CD4-positive, alpha-beta T cell (primary cell): ENCODE measurements at regions of chr10 and their contacts with region 1.

Region 1: GRCh38 chr10:80509403-80510161 is 28.1 kb upstream of the SH2D4B start:
- DNase-seq: no peak
- ATAC-seq: no peak
- H3K4me3 ChIP-seq: no peak overlapping the region
- H3K4me3 Mint-ChIP-seq: no peak overlapping the region
- H3K27ac ChIP-seq: no peak overlapping the region
- H3K27ac Mint-ChIP-seq: peak overlapping the region; percentile 2
- H3K4me1 ChIP-seq: peaks cover 42% of the 10 kb centered on the region
- H3K4me1 Mint-ChIP-seq: peaks cover 41% of the 10 kb centered on the region
- H3K27me3 ChIP-seq: no peaks in the 10 kb centered on the region
- H3K27me3 Mint-ChIP-seq: no peaks in the 10 kb centered on the region
- CTCF ChIP-seq: no peak

Region 2: DNA sequence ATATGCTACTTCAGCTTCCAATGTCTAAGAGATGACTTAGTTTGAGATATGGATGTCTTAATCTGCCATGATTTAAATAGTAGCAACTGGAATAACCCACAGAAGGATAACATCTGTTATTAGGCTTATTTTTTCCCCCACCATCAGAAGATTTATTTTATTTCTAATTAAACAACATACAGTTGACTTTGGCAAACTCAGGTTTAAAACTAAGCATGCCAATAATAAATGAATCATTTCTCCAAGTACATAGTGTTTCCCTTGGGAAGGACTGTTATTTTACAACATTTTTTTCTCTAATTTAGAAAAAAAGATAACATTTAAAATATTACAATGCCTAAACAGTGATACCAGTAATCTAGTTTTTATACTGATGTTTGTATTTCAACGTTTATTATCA is 619.1 kb before region 1 on chr10:
- CTCF ChIA-PET with region 1: no interaction called
- POLR2A ChIA-PET with region 1: no interaction called
- intact Hi-C with region 1: no loop called
- DNase-seq: no peak
- ATAC-seq: no peak
- H3K4me3 ChIP-seq: no peak overlapping the region
- H3K4me3 Mint-ChIP-seq: no peak overlapping the region
- H3K27ac ChIP-seq: no peak overlapping the region
- H3K27ac Mint-ChIP-seq: no peak overlapping the region
- H3K4me1 ChIP-seq: no peaks in the 10 kb centered on the region
- H3K4me1 Mint-ChIP-seq: no peaks in the 10 kb centered on the region
- H3K27me3 ChIP-seq: peaks cover 0 to 2% of the 10 kb centered on the region in 2 experiments
- H3K27me3 Mint-ChIP-seq: peaks cover 40% of the 10 kb centered on the region
- CTCF ChIP-seq: no peak

Region 3: GRCh38 chr10:80408242-80409101 is 101.1 kb before region 1 on chr10 and contains the start of gene PRXL2A:
- CTCF ChIA-PET with region 1: interaction called, 10 read pairs
- POLR2A ChIA-PET with region 1: interaction called, 8 read pairs
- intact Hi-C with region 1: no loop called
- DNase-seq: peak; percentile 61 to 89 (median 76)
- ATAC-seq: peak; percentile 95
- H3K4me3 ChIP-seq: peak within 1 kb of the TSS; percentile 83
- H3K4me3 Mint-ChIP-seq: peak within 1 kb of the TSS; percentile 94
- H3K27ac ChIP-seq: peak within 1 kb of the TSS in 1 of 2 donors; percentile 10
- H3K27ac Mint-ChIP-seq: peak within 1 kb of the TSS; percentile 69
- H3K4me1 ChIP-seq: peaks cover 19% of the 10 kb centered on the region
- H3K4me1 Mint-ChIP-seq: peaks cover 50% of the 10 kb centered on the region
- H3K27me3 ChIP-seq: no peaks in the 10 kb centered on the region
- H3K27me3 Mint-ChIP-seq: no peaks in the 10 kb centered on the region
- CTCF ChIP-seq: no peak
- total RNA-seq, gene PRXL2A: 3.9 to 4.6 TPM

Region 4: GRCh38 chr10:80453701-80454513 is 55.7 kb before region 1 on chr10 and contains the start of gene TSPAN14:
- CTCF ChIA-PET with region 1: interaction called, 250 read pairs
- POLR2A ChIA-PET with region 1: interaction called, 302 read pairs
- intact Hi-C with region 1: no loop called
- DNase-seq: peak; percentile 50 to 90 (median 76)
- ATAC-seq: peak; percentile 61
- H3K4me3 ChIP-seq: peak within 1 kb of the TSS; percentile 97
- H3K4me3 Mint-ChIP-seq: peak within 1 kb of the TSS; percentile 95
- H3K27ac ChIP-seq: peak within 1 kb of the TSS; percentile 67 to 80
- H3K27ac Mint-ChIP-seq: peak within 1 kb of the TSS; percentile 92
- H3K4me1 ChIP-seq: peaks cover 47% of the 10 kb centered on the region
- H3K4me1 Mint-ChIP-seq: peaks cover 36% of the 10 kb centered on the region
- H3K27me3 ChIP-seq: no peaks in the 10 kb centered on the region
- H3K27me3 Mint-ChIP-seq: no peaks in the 10 kb centered on the region
- CTCF ChIP-seq: no peak
- total RNA-seq, gene TSPAN14: 167 to 168 TPM

Region 5: DNA sequence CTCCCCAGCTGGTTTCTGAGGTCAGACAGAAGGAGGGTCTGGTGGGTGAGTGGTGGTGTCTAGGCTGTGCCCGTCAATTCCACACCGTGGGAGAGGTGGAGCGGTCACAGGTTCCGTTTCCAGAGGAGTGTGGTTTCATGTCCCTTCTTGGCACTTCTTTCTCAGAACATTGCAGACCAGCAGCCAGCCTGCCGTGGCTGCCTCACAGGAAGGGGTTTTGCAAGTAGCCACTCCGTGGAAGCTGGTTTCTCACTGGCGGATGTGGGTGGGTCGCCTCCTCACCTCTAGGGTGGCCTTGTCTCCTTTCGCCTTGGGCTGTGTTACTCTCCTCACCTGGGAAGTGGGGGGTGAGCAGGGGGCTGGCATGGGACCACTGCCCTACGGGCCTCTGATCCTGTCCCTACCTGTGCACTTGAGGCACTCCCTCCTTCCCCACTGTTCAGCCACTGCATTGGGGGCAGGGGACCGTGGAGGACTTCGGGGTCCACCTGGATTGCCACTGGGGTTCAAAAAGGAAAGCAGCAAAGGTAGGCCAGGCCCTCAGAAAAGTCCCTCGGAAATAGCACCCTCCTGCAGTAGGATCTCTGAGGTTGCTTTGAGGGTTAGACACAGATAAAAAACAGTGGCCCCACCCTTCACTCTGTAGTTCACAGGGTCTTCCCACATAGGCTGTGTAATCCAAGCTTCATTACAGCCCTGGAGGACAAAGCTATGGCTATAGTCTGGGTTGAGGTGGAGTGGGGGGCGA is 21.6 kb before region 1 on chr10:
- CTCF ChIA-PET with region 1: interaction called, 55 read pairs
- POLR2A ChIA-PET with region 1: interaction called, 158 read pairs
- intact Hi-C with region 1: no loop called
- DNase-seq: peak in 13 of 14 experiments; percentile 43 to 88 (median 58)
- ATAC-seq: peak; percentile 62
- H3K4me3 ChIP-seq: peak overlapping the region; percentile 37
- H3K4me3 Mint-ChIP-seq: peak overlapping the region; percentile 56
- H3K27ac ChIP-seq: peak overlapping the region; percentile 81 to 84
- H3K27ac Mint-ChIP-seq: peak overlapping the region; percentile 78
- H3K4me1 ChIP-seq: peaks cover 98% of the 10 kb centered on the region
- H3K4me1 Mint-ChIP-seq: peaks cover 99% of the 10 kb centered on the region
- H3K27me3 ChIP-seq: no peaks in the 10 kb centered on the region
- H3K27me3 Mint-ChIP-seq: no peaks in the 10 kb centered on the region
- CTCF ChIP-seq: no peak

Region 6: GRCh38 chr10:80498833-80499741 is 10.5 kb before region 1 on chr10:
- CTCF ChIA-PET with region 1: interaction called, 21 read pairs
- POLR2A ChIA-PET with region 1: interaction called, 158 read pairs
- intact Hi-C with region 1: no loop called
- DNase-seq: peak in 9 of 14 experiments; percentile 31 to 77 (median 49)
- ATAC-seq: peak; percentile 30
- H3K4me3 ChIP-seq: peak overlapping the region; percentile 10
- H3K4me3 Mint-ChIP-seq: peak overlapping the region; percentile 83
- H3K27ac ChIP-seq: peak overlapping the region; percentile 49 to 54
- H3K27ac Mint-ChIP-seq: peak overlapping the region; percentile 78
- H3K4me1 ChIP-seq: peaks cover 89% of the 10 kb centered on the region
- H3K4me1 Mint-ChIP-seq: peaks cover 100% of the 10 kb centered on the region
- H3K27me3 ChIP-seq: no peaks in the 10 kb centered on the region
- H3K27me3 Mint-ChIP-seq: no peaks in the 10 kb centered on the region
- CTCF ChIP-seq: no peak